MCF 10A (cell line): ENCODE measurements at regions of chr5 and their contacts with region 1.

Region 1: DNA sequence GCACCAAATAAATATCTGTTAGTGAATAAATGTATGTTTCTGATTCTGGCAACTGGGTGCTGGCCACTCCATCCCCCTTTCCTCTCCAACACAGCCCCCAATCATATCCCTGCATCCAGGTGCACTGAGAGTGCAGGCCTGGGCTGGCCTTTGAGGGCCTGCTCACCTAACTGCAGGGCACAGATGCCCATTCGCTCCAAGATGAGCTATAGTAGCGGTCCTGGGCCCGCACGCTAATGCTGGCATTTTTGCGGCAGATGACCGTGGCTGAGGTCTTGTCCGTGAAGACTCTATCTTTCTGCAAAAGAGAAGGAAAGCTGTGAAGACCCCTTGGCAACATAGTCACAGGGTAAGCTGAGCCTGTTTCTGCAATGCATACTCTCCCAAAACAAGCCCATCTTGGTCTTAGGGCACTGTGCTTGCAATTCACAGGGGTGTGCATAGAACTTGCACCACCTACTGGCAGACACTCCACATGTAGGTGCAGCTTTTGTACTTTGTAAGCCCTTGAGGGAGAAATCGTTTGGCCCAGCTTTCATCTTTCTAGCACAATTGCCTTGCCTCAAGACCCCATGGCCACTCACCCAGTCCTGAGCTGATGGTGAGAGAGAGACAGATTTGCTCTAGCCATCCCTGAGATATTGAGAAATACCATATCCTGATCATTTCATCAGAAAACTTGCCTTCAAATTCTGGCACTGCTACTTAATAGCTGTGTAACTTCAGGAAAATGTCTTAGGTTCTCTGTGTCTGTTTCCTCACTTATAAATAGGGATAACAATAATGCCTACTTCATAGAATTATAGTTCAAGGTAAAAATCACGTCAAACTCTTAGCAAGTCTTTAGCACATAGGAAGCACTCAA is 13.5 kb downstream of the IL12B start:
- DNase-seq: peak; percentile 77
- H3K4me3 Mint-ChIP-seq: no peak overlapping the region
- H3K27ac Mint-ChIP-seq: no peak overlapping the region
- H3K4me1 Mint-ChIP-seq: no peaks in the 10 kb centered on the region
- H3K27me3 Mint-ChIP-seq: no peaks in the 10 kb centered on the region
- CTCF ChIP-seq: peak; percentile 91

Region 2: GRCh38 chr5:159163027-159163700 is 153.6 kb before region 1 on chr5:
- CTCF ChIA-PET with region 1: interaction called, 12 read pairs
- POLR2A ChIA-PET with region 1: interaction called, 7 read pairs
- intact Hi-C with region 1: no loop called
- DNase-seq: peak; percentile 78
- H3K4me3 Mint-ChIP-seq: peak overlapping the region; percentile 3
- H3K27ac Mint-ChIP-seq: peak overlapping the region; percentile 69
- H3K4me1 Mint-ChIP-seq: peaks cover 27% of the 10 kb centered on the region
- H3K27me3 Mint-ChIP-seq: no peaks in the 10 kb centered on the region
- CTCF ChIP-seq: no peak

Region 3: DNA sequence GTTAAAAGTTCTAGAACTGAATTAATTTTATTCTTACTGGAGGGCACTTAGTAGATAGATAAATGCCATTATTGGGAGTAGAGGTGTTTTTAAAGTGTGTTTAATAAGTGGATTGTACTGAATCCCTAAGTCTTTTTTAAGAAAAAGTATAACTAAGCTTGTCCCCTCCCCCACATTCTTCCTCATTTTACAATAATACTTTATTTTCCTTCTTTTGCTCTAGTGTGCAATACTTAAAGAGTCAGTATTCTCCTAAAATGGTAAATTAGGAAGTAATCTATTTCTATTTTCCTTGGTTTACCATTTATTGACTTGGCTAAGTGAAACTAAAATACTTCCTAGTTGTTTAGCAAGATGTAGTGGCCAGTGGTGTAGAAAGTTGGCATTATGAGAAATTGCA is 42.1 kb before region 1 on chr5:
- CTCF ChIA-PET with region 1: interaction called, 28 read pairs
- POLR2A ChIA-PET with region 1: interaction called, 5 read pairs
- intact Hi-C with region 1: no loop called
- DNase-seq: no peak
- H3K4me3 Mint-ChIP-seq: peak overlapping the region; percentile 19
- H3K27ac Mint-ChIP-seq: peak overlapping the region; percentile 79
- H3K4me1 Mint-ChIP-seq: peaks cover 8% of the 10 kb centered on the region
- H3K27me3 Mint-ChIP-seq: no peaks in the 10 kb centered on the region
- CTCF ChIP-seq: no peak

Region 4: GRCh38 chr5:159294921-159295320 is 21.8 kb before region 1 on chr5:
- CTCF ChIA-PET with region 1: interaction called, 154 read pairs
- POLR2A ChIA-PET with region 1: interaction called, 4 read pairs
- intact Hi-C with region 1: no loop called
- DNase-seq: no peak
- H3K4me3 Mint-ChIP-seq: no peak overlapping the region
- H3K27ac Mint-ChIP-seq: no peak overlapping the region
- H3K4me1 Mint-ChIP-seq: no peaks in the 10 kb centered on the region
- H3K27me3 Mint-ChIP-seq: no peaks in the 10 kb centered on the region
- CTCF ChIP-seq: no peak

Region 5: DNA sequence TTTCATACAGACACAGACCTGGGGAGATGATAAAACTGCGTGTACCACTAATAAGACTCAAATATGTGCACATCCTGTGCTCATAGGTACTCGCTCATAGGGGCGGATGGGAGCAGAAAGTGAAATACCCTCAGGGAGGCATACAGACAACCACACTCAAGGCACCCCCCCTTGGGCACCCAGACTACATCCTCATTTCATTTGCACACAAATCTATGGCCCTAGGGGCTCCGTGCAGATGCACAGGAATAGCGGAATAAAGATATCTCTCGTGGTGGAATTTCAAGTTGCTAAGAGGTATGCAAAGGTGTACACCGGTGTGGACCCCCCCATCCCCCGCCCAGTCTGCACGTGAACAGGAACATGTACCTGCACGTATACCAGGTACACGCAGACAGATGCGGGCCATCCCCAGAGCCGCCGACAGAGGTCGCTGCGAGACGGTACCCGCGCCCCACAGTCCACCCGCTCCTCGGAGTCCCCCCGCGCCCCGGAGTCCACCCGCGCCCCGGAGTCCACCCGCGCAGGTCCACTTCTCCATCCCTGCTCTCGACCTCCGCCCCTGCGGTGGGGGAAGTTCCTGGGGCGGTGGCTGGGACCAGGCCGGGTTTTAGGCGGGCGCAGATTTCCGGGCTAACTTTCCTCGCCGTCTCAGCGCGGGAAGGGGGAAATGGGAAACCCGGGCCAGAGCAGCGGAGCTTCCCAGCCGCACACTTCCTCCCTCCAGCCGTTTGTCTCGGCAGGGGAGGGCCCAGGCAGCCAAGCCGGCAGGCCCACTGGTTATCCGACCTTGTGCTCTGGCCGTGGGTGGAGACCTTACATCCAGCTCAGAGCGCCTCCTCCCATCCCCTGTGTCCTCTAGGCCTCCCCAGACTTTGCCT is 14.6 kb after region 1 on chr5:
- CTCF ChIA-PET with region 1: interaction called, 41 read pairs
- POLR2A ChIA-PET with region 1: interaction called, 3 read pairs
- intact Hi-C with region 1: no loop called
- DNase-seq: peak; percentile 49
- H3K4me3 Mint-ChIP-seq: peak overlapping the region; percentile 73
- H3K27ac Mint-ChIP-seq: peak overlapping the region; percentile 80
- H3K4me1 Mint-ChIP-seq: peaks cover 30% of the 10 kb centered on the region
- H3K27me3 Mint-ChIP-seq: no peaks in the 10 kb centered on the region
- CTCF ChIP-seq: peak; percentile 80